ENCODE measurements at regions of chr13 and their contacts with region 1.

Region 1: GRCh38 chr13:50801087-50801931 is 42.2 kb downstream of the DLEU7 start:
- DNase-seq: peak in 8 of 10 donors; percentile 32 to 65 (median 50)
- H3K4me3 ChIP-seq: peak overlapping the region in 20 of 59 donors; percentile 3 to 46 (median 22)
- H3K27ac ChIP-seq: peak overlapping the region in 7 of 59 donors; percentile 13 to 65 (median 33)
- H3K27me3 ChIP-seq: no peaks in the 10 kb centered on the region
- CTCF ChIP-seq: peak; percentile 46 to 90 (median 79)

Region 2: GRCh38 chr13:49976314-49977258 is 824.7 kb before region 1 on chr13:
- intact Hi-C with region 1: loop called in 1 of 2 experiments (anchors 5 kb)
- DNase-seq: peak; percentile 53 to 83 (median 68)
- H3K4me3 ChIP-seq: no peak overlapping the region
- H3K27ac ChIP-seq: peak overlapping the region in 9 of 59 donors; percentile 10 to 60 (median 41)
- H3K27me3 ChIP-seq: no peaks in the 10 kb centered on the region
- CTCF ChIP-seq: peak; percentile 75 to 98 (median 88)

Region 3: GRCh38 chr13:50123862-50124536 is 677.3 kb before region 1 on chr13:
- intact Hi-C with region 1: loop called in 1 of 2 experiments (anchors 2 kb)
- DNase-seq: peak in 9 of 10 donors; percentile 56 to 94 (median 72)
- H3K4me3 ChIP-seq: peak overlapping the region; percentile 66 to 99 (median 96)
- H3K27ac ChIP-seq: peak overlapping the region; percentile 95 to 100 (median 100)
- H3K27me3 ChIP-seq: peaks cover 0 to 11% (median 0%) of the 10 kb centered on the region in 45 donors
- CTCF ChIP-seq: peak in 25 of 56 donors; percentile 0 to 49 (median 20)

Region 4: DNA sequence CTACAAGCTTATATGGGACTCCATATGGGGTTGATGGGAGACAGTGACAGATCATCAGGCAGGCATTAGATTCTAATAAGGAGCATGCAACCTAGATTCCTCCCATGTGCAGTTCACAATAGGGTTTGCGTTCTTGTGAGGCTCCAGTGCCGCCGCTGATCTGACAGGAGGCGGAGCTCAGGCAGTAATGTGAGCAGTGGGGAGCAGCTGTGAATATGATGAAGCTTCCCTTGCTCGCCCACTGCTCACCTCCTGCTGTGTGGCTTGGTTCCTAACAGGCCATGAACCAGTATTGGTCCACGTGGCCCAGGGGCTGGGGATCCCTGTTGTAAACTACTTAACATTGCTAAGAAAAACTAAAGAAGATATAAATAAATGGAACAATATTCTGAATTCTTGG is 407.7 kb before region 1 on chr13:
- intact Hi-C with region 1: loop called in 1 of 2 experiments (anchors 10 kb)
- DNase-seq: peak in 2 of 10 donors; percentile 16 to 34
- H3K4me3 ChIP-seq: peak overlapping the region in 1 of 59 donors; percentile 4
- H3K27ac ChIP-seq: peak overlapping the region in 3 of 59 donors; percentile 9 to 31 (median 29)
- H3K27me3 ChIP-seq: no peaks in the 10 kb centered on the region
- CTCF ChIP-seq: no peak

Region 5: DNA sequence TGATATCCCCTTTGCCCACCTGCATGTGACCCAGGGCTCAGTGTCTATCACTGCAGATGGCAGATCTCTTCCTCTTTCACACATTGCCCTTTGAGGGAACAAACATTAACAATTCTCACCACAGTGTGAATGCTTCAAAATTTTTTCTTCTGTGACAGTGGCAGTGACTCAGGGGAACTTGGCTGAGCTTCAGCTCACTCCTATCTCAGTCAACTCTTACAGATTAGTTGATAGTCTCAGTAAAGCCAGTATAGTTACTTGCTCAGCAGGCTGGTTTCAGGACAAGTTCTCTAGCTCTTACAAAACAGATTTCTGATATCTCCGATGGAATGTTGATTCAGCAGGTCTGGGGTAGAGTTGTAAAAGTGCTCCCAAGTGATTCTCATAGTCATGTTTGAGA is 124.7 kb before region 1 on chr13:
- intact Hi-C with region 1: loop called in 1 of 2 experiments (anchors 10 kb)
- DNase-seq: no peak
- H3K4me3 ChIP-seq: no peak overlapping the region
- H3K27ac ChIP-seq: peak overlapping the region in 24 of 59 donors; percentile 50 to 92 (median 84)
- H3K27me3 ChIP-seq: no peaks in the 10 kb centered on the region
- CTCF ChIP-seq: no peak